GM12878 (cell line): ENCODE measurements at regions of chr2 and their contacts with region 1.

Region 1: GRCh38 chr2:54471221-54471711 is 15.1 kb downstream of the SPTBN1 start:
- DNase-seq: peak; percentile 55
- ATAC-seq: peak; percentile 93
- H3K4me3 ChIP-seq: no peak overlapping the region
- H3K27ac ChIP-seq: no peak overlapping the region
- H3K4me1 ChIP-seq: peaks cover 5% of the 10 kb centered on the region; the same call in 1 of the 2 replicates
- H3K27me3 ChIP-seq: no peaks in the 10 kb centered on the region
- CTCF ChIP-seq: no peak
- EP300 ChIP-seq: no peak
- POLR2A ChIP-seq: no peak
- RAD21 ChIP-seq: no peak

Region 2: DNA sequence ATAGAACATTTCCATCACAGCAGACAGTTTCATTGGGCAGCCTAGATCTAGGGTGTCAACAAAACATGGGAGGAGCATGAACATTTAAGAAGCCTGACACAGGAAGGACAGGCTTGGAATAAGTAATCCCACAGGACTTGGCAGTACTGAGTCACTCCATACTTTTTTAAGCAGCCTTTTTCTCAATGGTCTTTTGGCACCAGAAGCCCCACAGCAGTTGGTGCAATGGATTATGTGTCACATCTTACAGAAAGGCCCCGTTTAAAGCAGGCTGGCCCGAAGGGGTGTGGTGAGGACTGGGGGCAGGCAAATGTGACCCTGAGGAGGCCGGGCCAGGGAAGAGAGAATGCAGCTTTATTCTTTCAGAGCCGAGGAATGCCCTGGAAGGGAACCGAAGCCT is 11.4 kb after region 1 on chr2:
- CTCF ChIA-PET with region 1: no interaction called
- POLR2A ChIA-PET with region 1: interaction called, 8 read pairs
- RAD21 ChIA-PET with region 1: interaction called, 9 read pairs
- SMC1A ChIA-PET with region 1: interaction called, 24 read pairs
- in situ Hi-C with region 1: no loop called
- intact Hi-C with region 1: no loop called
- DNase-seq: no peak
- ATAC-seq: no peak
- H3K4me3 ChIP-seq: no peak overlapping the region
- H3K27ac ChIP-seq: no peak overlapping the region
- H3K4me1 ChIP-seq: no peaks in the 10 kb centered on the region
- H3K27me3 ChIP-seq: no peaks in the 10 kb centered on the region
- CTCF ChIP-seq: no peak
- EP300 ChIP-seq: no peak
- POLR2A ChIP-seq: no peak
- RAD21 ChIP-seq: no peak